ENCODE measurements at regions of chr6 and their contacts with region 1.

Region 1: DNA sequence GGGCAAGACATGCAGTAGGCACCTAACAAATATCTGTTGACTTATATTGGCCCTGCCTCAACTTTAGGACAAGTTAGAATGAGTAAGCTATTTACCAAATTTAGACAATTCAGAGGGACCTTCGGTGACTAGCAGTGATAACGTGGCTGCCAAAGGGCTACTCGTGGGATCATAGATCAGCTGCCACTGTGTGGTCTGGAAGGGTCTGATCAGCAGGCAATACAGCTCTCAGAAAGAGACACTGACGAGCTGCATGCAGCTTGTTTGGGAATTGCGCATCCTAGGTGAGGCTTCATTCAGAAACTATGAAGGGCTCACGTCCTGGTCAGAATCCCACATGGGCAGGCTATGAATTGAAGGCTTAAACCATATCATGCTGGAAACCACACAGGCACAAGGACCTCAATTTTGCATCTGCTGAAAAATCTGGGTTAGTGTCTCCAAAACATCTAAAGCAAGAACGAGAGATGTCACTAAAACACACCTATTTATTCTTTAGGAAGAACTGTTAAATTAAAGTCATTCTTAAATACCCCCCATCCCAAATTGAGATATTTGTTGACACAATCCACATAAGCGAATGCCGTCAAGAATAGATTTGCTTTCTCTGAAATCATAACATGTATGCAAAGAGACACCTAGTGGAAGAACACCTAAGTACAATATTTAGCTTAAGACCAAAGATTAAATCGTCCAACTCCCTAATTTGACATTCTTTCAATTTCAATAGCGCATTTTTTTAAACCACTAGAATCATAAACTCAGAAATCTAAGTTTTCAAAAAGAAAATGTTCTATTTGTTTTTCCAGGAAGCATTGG is 79.6 kb downstream of the IPCEF1 start:
- DNase-seq: peak in 4 of 5 donors; percentile 61 to 65 (median 63)
- H3K4me3 ChIP-seq: peak overlapping the region in 1 of 2 donors; percentile 26
- H3K4me3 Mint-ChIP-seq: peak overlapping the region; percentile 54 to 91 (median 79)
- H3K27ac ChIP-seq: no peak overlapping the region
- H3K27ac Mint-ChIP-seq: peak overlapping the region; percentile 2 to 85 (median 57)
- H3K4me1 ChIP-seq: peaks cover 16% of the 10 kb centered on the region
- H3K4me1 Mint-ChIP-seq: peaks cover 17 to 27% (median 22%) of the 10 kb centered on the region in 4 donors
- H3K27me3 ChIP-seq: no peaks in the 10 kb centered on the region
- H3K27me3 Mint-ChIP-seq: no peaks in the 10 kb centered on the region

Region 2: GRCh38 chr6:154156135-154156896 is 120.7 kb before region 1 on chr6:
- CTCF ChIA-PET with region 1: interaction called, 323 read pairs
- POLR2A ChIA-PET with region 1: interaction called, 21 read pairs
- intact Hi-C with region 1: loop called (anchors 1 kb)
- DNase-seq: peak; percentile 48 to 76 (median 56)
- H3K4me3 ChIP-seq: peak overlapping the region; percentile 32 to 46
- H3K4me3 Mint-ChIP-seq: peak overlapping the region; percentile 67 to 92 (median 84)
- H3K27ac ChIP-seq: peak overlapping the region; percentile 72
- H3K27ac Mint-ChIP-seq: peak overlapping the region; percentile 84 to 94 (median 93)
- H3K4me1 ChIP-seq: peaks cover 45% of the 10 kb centered on the region
- H3K4me1 Mint-ChIP-seq: peaks cover 38 to 66% (median 49%) of the 10 kb centered on the region in 4 donors
- H3K27me3 ChIP-seq: no peaks in the 10 kb centered on the region
- H3K27me3 Mint-ChIP-seq: no peaks in the 10 kb centered on the region

Region 3: DNA sequence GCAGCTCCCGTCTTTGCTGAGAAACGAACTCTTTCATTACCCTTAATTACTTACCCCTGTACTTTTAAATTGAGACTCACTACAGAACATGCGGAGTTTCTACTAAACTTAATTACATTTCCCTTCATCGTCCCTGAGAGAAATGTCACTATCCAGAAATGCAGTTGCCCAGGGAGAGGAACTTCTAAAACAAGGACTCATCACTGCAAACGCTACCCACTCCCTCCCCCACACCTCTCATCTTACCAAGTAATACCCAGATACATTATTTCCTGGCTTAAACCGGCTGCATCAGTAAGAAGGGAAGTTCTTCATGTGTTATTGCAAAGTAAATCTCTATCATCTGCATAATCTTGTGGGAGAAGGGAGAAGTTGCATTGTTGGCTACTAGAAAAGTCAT is 58.7 kb before region 1 on chr6:
- CTCF ChIA-PET with region 1: interaction called, 16 read pairs
- POLR2A ChIA-PET with region 1: no interaction called
- intact Hi-C with region 1: loop called (anchors 1 kb)
- DNase-seq: no peak
- H3K4me3 ChIP-seq: no peak overlapping the region
- H3K4me3 Mint-ChIP-seq: peak overlapping the region in 7 of 8 donors; percentile 25 to 85 (median 57)
- H3K27ac ChIP-seq: no peak overlapping the region
- H3K27ac Mint-ChIP-seq: peak overlapping the region; percentile 53 to 90 (median 81)
- H3K4me1 ChIP-seq: peaks cover 54% of the 10 kb centered on the region
- H3K4me1 Mint-ChIP-seq: peaks cover 38 to 53% (median 41%) of the 10 kb centered on the region in 4 donors
- H3K27me3 ChIP-seq: no peaks in the 10 kb centered on the region
- H3K27me3 Mint-ChIP-seq: no peaks in the 10 kb centered on the region

Region 4: DNA sequence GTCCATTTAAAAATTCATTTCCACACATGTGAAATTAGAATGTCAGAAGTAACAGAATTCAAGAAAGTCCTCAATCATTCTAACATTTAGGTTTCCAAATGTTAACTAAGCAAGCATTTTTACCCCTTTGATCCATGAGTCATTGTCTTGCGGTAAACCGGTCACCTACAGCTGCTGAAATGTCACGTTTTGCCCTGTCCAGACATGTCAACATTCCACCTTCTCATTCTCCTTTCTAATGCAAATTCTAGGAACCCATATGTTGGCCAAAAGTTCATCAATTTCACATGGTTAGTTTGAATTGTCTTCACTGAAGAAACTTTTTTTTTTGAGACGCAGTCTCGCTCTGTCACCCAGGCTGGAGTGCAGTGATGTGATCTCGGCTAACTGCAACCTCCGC is 37.6 kb before region 1 on chr6:
- CTCF ChIA-PET with region 1: interaction called, 113 read pairs
- POLR2A ChIA-PET with region 1: interaction called, 9 read pairs
- intact Hi-C with region 1: no loop called
- DNase-seq: peak in 1 of 5 donors; percentile 61
- H3K4me3 ChIP-seq: no peak overlapping the region
- H3K4me3 Mint-ChIP-seq: peak overlapping the region; percentile 26 to 79 (median 68)
- H3K27ac ChIP-seq: no peak overlapping the region
- H3K27ac Mint-ChIP-seq: peak overlapping the region; percentile 17 to 87 (median 66)
- H3K4me1 ChIP-seq: peaks cover 85% of the 10 kb centered on the region
- H3K4me1 Mint-ChIP-seq: peaks cover 57 to 86% (median 75%) of the 10 kb centered on the region in 4 donors
- H3K27me3 ChIP-seq: no peaks in the 10 kb centered on the region
- H3K27me3 Mint-ChIP-seq: no peaks in the 10 kb centered on the region

Region 5: GRCh38 chr6:154370545-154370944 is 93.5 kb after region 1 on chr6:
- CTCF ChIA-PET with region 1: interaction called, 8 read pairs
- POLR2A ChIA-PET with region 1: no interaction called
- intact Hi-C with region 1: loop called (anchors 10 kb)
- DNase-seq: peak in 4 of 5 donors; percentile 1 to 14 (median 10)
- H3K4me3 ChIP-seq: no peak overlapping the region
- H3K4me3 Mint-ChIP-seq: peak overlapping the region in 2 of 8 donors; percentile 14 to 45
- H3K27ac ChIP-seq: no peak overlapping the region
- H3K27ac Mint-ChIP-seq: no peak overlapping the region
- H3K4me1 ChIP-seq: no peaks in the 10 kb centered on the region
- H3K4me1 Mint-ChIP-seq: peaks cover 0 to 2% (median under 1%) of the 10 kb centered on the region in 4 donors
- H3K27me3 ChIP-seq: no peaks in the 10 kb centered on the region
- H3K27me3 Mint-ChIP-seq: peaks cover 0 to 7% of the 10 kb centered on the region in 2 donors